PC-3 (cell line): ENCODE measurements at regions of chrX and their contacts with region 1.

Region 1: DNA sequence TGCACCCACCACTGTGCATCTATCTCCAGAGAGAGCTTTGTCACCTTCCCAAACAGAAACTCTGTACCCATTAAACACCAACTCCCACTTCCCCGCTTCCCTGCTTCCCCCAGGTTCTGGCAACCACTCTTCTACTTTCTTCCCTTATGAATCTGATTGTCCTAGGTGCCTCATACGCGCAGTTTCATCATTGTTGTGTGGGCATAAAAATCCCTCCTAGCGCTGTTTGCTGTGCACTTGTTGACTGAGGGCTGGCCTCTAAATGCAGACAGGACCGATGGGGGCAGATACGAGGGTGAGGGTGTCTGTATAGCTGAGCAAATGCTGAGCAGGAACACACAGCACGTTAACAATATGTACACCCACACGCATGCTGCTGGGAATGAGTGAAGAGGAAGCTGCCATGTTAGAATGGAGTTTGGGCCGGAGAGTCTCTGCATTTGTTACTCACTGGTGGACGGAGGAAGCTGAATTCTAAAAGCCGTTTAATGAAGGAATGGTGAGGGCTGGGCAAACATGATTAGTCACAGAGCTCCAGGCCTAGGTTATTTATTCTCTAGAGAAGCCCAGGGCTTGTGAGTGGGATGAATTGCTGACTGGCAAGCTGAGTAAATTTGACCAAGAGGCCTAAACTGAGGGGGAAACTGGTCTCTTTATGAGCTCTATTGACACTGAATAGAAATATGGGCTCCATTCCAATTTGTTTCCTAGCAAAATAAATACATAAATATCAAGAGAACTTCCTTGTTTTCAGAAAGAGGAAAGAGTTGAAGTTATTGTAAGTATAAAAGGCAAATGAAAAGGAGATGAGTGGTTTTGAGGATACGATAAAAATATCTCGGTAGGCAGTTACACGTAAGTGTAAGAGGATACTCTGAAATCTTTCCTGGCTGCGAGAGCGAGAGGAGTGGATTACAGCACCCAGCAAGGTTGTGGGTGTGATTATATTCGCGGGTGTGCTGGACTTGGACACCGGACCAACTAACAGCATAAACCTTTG is 95.9 kb upstream of the RPS6KA3 start:
- DNase-seq: peak; percentile 89
- ATAC-seq: peak; percentile 92
- H3K4me3 ChIP-seq: peak overlapping the region; percentile 58
- H3K27ac ChIP-seq: peak overlapping the region; percentile 97
- H3K4me1 ChIP-seq: peaks cover 26% of the 10 kb centered on the region
- H3K27me3 ChIP-seq: no peaks in the 10 kb centered on the region
- CTCF ChIP-seq: no peak

Region 2: GRCh38 chrX:20252381-20253231 is 110.0 kb before region 1 on chrX:
- CTCF ChIA-PET with region 1: no interaction called
- POLR2A ChIA-PET with region 1: no interaction called
- intact Hi-C with region 1: loop called (anchors 2 kb)
- DNase-seq: peak; percentile 81
- ATAC-seq: peak; percentile 80
- H3K4me3 ChIP-seq: no peak overlapping the region
- H3K27ac ChIP-seq: no peak overlapping the region
- H3K4me1 ChIP-seq: peaks cover 29% of the 10 kb centered on the region
- H3K27me3 ChIP-seq: no peaks in the 10 kb centered on the region
- CTCF ChIP-seq: peak; percentile 75

Region 3: DNA sequence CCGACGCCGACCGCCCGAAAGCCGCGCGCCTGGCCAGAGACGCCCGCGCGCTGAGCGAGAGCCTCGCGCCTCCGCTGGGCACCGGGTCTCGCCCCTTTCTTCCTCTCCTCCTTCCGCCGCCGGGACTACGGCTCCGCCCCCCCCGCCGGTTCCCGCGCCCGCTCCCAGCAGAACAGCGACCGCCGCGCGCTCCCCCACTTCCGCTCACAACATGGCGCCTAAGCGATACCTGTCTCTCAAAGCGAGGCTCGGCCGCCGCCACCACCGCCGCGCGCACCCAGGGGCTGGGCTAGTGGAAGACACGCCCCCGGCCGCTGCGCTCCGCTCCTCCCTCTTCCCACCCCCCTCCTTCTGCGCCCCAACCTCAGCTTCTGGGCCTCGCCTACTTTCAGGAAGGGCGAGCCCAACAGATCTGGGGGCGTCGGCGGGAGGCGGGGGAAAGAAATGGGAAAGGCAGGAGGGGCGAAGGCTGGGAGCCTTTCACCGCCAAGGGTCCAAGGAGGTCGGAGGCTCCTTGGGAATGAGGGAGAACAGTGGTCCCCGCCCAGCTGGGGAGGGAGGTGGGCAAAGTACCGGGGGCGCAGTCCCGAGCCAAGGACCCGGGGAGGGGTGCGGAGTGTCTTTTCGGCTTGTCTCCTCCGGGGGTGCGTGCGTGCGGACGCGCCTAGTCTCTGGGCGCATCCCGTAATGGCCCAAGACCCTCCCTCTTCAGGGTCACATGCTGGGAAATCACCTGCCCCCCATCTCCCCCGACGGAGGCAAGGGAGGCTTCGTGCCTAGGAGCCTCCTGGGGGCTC is 95.6 kb before region 1 on chrX and contains the start of gene RPS6KA3:
- CTCF ChIA-PET with region 1: interaction called, 10 read pairs
- POLR2A ChIA-PET with region 1: no interaction called
- intact Hi-C with region 1: loop called (anchors 1 kb)
- DNase-seq: peak; percentile 82
- ATAC-seq: peak; percentile 72
- H3K4me3 ChIP-seq: peak within 1 kb of the TSS; percentile 84
- H3K27ac ChIP-seq: peak within 1 kb of the TSS; percentile 67
- H3K4me1 ChIP-seq: peaks cover 49% of the 10 kb centered on the region
- H3K27me3 ChIP-seq: no peaks in the 10 kb centered on the region
- CTCF ChIP-seq: no peak
- total RNA-seq, gene RPS6KA3: 22.8 and 24.6 TPM in 2 replicates

Region 4: GRCh38 chrX:20285513-20285912 is 77.1 kb before region 1 on chrX:
- CTCF ChIA-PET with region 1: no interaction called
- POLR2A ChIA-PET with region 1: no interaction called
- intact Hi-C with region 1: loop called (anchors 2 kb)
- DNase-seq: peak; percentile 79
- ATAC-seq: peak; percentile 97
- H3K4me3 ChIP-seq: no peak overlapping the region
- H3K27ac ChIP-seq: peak overlapping the region; percentile 79
- H3K4me1 ChIP-seq: peaks cover 16% of the 10 kb centered on the region
- H3K27me3 ChIP-seq: no peaks in the 10 kb centered on the region
- CTCF ChIP-seq: no peak

Region 5: DNA sequence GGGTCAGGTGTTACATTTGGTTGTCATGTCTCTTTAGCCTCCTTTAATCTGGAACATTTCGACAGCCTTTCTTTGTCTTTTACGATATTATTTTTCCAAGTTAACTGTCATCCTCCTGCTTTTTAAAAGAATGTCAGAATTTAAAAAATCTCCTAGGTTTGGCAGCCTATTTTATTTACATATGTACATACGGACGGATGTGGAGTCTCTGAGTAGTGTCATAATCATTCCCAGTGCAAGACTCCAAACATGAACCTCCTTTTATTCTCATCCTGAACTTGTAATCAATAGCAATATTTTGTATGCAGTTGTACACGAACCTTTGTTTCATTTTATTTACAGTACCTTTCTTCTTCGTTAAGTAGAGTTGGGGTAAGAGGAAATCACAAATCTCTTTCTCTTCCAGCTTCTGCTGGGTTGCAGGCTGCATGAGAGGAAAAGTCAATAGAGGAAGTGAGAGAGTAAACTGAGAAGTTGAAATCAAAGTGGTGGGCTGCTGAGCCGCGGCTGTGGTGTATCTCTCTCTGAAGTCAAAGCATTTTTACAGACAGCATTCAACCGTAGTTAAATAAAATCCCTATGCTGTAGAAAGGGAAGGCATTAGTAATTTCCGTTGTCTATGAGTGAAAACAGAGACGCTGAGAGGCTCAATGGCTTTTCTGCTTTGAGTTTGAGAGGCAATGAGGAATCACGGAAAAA is 42.0 kb before region 1 on chrX:
- CTCF ChIA-PET with region 1: no interaction called
- POLR2A ChIA-PET with region 1: no interaction called
- intact Hi-C with region 1: loop called (anchors 2 kb)
- DNase-seq: peak; percentile 52
- ATAC-seq: peak; percentile 83
- H3K4me3 ChIP-seq: peak overlapping the region; percentile 61
- H3K27ac ChIP-seq: peak overlapping the region; percentile 62
- H3K4me1 ChIP-seq: peaks cover 18% of the 10 kb centered on the region; the same call in 1 of the 2 replicates
- H3K27me3 ChIP-seq: no peaks in the 10 kb centered on the region
- CTCF ChIP-seq: no peak

Region 6: DNA sequence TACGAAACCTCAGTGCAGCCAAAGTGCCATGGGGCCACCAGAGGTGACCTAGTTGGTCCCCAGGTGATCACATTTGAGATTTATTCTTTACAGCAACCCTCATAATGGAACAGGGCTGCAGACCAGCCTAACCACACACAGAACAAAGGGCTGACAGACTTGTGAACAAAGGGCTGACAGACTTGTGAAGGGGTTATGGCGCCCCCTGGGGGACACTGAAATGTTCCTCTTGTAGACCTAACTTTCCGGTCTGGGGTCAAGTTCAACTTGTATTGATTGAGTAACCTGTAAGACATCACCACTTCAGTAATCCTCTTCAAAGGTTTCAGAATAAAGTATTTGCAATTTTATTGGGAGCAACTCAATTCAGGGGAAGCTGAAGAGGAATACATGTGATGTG is 80.0 kb after region 1 on chrX:
- CTCF ChIA-PET with region 1: no interaction called
- POLR2A ChIA-PET with region 1: no interaction called
- intact Hi-C with region 1: loop called (anchors 5 kb)
- DNase-seq: peak; percentile 86
- ATAC-seq: peak; percentile 74
- H3K4me3 ChIP-seq: no peak overlapping the region
- H3K27ac ChIP-seq: no peak overlapping the region
- H3K4me1 ChIP-seq: peaks cover 3% of the 10 kb centered on the region; the same call in 1 of the 2 replicates
- H3K27me3 ChIP-seq: no peaks in the 10 kb centered on the region
- CTCF ChIP-seq: peak; percentile 80